AG04449 (cell line): ENCODE measurements at regions of chr19 and their contacts with region 1.

Region 1: DNA sequence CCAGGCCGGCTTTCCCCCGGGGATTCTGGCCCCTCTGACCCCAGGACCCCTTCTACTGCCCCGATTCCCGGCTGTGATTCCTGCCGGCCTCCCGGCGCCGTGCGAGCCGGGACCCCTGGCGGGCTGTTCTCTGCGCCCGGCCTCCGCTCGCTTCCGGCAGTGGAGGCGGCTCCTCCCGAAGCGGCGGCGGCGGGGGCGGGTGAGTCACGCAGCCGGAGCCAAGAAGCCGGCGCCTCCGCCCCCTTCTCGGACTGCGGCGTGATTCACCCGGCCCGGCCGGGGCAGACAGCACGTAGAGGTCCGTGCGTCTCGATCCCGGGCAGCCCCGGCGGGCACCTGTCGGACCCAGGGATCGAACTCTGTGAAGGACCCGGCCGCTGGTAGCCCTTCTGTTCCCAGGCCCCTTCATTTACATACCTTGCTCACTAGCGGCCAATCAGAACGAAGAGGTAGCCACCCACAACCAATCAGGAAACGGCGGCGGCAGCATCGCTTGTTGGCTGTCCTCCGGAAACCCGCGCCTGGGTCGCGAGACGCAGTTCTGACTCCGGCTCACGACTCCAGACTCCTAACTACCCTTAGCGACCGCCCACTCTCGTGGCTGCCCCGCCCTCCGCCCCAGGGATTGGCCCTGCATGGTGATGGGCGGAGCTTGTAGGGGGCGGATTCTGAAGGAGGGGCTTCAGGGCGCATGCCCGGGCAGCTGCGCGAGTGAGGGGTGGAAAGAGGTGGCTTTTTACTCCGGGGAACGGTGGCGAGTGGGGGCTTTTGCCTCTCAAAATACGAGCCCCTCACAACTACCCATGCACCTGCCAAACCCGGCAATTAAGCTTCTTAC is at the start of gene SERTAD1:
- DNase-seq: peak; percentile 94
- H3K4me3 ChIP-seq: peak within 1 kb of the TSS; percentile 90
- CTCF ChIP-seq: peak; percentile 62

Region 2: DNA sequence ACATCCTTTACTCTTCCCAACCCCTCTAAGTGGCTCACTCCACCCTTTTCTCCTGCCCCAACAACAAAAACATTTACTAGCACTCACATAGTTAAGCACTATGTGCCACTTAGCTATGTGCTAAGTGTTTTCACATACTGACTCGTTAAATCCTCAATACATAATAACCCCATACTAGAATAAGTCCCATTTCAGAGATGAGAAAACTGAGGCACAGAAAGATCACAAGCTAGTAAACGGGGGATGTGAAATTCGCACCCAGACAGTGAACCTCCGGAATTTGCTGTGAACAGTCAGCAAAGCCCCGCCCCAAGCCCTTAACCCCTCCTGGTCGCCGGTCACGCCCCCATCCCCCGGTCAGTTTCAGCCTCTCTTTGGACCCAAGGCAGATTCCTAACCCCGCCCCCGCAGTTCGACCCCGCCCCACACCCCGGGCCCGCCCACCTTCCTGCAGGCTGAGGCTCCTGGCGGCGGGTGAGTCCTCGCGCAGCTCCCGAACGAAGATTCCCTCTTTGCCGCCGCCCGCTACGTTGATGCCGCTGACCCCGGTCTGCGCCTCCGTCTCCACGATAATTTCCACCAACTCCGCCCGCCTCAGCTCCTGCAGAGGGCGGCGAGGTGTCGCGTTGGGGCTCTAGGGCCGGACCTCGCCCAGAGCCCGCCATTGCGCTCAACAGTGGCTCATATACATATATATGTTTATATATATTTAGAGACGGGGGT is 22.2 kb before region 1 on chr19:
- CTCF ChIA-PET with region 1: interaction called, 62 read pairs
- POLR2A ChIA-PET with region 1: interaction called, 10 read pairs
- DNase-seq: peak; percentile 28
- H3K4me3 ChIP-seq: peak overlapping the region; percentile 61
- CTCF ChIP-seq: no peak

Region 3: DNA sequence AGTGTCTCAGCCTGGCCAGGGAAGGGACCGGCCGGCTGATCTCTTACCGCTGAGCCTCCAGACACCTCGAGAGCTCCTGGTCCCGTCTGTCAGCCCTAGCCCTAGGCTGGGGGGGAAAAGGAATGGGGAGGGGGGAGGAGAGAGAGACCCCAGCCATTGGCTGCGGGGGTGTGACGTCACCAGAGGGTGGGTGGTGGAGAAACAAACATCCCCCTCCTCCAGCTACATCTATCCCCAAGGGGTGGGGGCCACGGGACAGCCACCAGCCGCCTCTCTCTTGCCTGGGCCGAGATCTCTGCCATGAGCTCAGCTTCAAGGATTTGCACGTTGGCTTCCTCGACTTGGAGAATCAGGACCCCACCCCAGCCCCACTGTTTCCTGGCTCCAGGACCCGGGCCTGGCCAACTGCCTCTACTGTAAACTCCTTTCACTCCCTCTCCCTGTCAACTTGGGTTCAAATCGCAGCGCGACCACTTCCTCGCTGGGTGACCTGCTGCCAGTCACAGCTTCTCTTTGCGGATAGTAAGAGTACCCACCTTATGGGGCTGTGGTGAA is 12.3 kb before region 1 on chr19 and contains the start of gene PRX:
- CTCF ChIA-PET with region 1: interaction called, 62 read pairs
- POLR2A ChIA-PET with region 1: interaction called, 4 read pairs
- DNase-seq: no peak
- H3K4me3 ChIP-seq: no peak within 1 kb of the TSS
- CTCF ChIP-seq: no peak

Region 4: DNA sequence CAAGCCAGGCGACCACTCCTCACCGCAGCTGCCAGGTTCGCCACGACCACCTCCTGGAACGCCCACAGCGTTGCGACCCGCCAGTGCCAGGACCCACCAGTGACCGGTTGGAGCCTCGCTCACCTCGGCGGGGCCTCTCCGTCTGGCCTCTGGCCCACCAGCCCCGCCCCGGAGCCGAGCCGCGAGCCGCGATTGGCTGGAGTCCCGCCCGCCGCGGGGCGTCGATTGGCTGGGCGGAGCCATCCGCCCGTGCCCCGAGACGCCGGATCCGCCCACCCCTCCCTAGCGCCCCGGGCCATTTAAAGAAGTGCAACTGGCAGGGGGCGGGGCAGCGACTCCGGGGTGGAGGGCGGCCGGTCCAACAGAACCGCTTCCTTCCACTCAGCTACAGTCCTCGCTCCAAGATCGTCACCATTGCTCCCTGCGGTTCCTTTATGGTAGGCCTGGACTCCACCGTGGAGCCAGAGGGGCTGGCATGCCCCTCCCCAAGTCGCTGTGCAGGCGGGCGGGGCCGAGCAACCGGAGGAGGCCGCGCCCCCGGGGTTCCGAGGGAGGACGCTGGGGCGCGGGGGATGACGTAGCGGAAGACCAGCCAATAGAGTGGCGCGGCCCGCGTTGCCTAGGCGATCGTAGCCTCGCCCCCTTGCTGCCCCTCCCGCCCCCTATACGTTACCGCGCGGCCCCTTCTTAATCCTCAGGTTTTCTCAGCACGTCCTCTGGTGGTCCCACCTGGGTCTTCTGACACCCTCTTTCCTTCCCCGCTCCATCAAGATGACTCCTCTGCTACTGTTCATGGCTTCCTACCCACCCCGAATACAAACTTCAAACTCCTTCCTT is 18.7 kb after region 1 on chr19 and contains the start of gene SERTAD3:
- CTCF ChIA-PET with region 1: interaction called, 20 read pairs
- POLR2A ChIA-PET with region 1: interaction called, 37 read pairs
- DNase-seq: peak; percentile 44
- H3K4me3 ChIP-seq: peak within 1 kb of the TSS; percentile 98
- CTCF ChIP-seq: no peak